ENCODE measurements at regions of chr9 and their contacts with region 1.

Region 1: DNA sequence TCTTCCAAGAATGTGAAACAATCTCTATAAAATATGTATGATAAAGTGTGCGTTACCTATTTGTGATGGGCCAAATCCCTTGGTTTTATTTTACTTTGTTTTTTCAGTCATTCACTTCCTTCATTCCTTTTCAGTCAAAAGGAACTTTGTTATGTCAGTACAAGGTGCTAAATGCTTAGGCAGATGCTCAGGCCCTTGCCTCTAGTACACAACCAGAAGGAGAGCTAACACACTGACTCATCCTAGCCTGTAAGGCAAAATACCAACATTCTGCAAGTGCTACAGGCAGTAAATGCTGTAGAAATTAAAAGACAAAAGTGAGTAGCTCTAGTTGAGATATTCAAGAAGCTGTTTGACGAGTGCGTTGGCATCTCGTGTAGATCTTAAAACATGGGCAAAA is 49.4 kb downstream of the TRPM6 start:
- DNase-seq: peak; percentile 37 to 53
- H3K4me3 ChIP-seq: no peak overlapping the region
- H3K27ac ChIP-seq: no peak overlapping the region
- H3K4me1 ChIP-seq: no peaks in the 10 kb centered on the region
- H3K27me3 ChIP-seq: no peaks in the 10 kb centered on the region
- CTCF ChIP-seq: no peak

Region 2: DNA sequence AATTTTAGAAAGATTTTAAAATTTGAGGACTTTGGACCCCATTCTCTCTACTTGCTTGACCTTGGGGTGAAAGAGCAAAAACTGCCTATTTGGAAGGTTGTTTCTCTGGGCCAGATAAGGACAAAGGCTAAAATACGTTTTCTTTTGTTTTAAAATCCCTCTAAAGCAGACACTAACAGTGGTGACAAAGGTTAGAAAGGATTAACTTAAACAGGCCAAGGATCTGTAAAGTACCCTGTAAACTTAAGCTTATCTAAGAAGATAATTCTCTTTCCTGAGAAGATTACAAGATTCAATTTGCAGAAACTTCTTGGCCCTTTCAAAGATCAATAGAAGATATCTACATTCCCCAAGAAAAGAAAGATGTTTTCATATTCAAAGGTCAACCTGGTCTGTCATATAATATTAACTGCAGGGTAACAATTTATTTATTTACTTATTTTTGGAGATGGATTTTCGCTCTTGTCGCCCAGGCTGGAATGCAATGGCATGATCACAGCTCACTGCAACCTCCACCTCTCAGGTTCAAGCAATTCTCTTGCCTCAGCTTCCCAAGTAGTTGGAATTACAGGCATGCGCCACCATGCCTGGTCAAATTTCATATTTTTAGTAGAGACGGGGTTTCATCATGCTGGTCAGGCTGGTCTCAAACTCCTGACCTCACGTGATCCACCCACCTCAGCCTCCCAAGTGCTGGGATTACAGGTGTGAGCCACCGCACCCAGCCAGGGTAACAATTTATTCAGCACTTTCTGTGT is 37.5 kb after region 1 on chr9:
- CTCF ChIA-PET with region 1: no interaction called
- POLR2A ChIA-PET with region 1: no interaction called
- intact Hi-C with region 1: no loop called
- DNase-seq: no peak
- H3K4me3 ChIP-seq: no peak overlapping the region
- H3K27ac ChIP-seq: no peak overlapping the region
- H3K4me1 ChIP-seq: no peaks in the 10 kb centered on the region
- H3K27me3 ChIP-seq: no peaks in the 10 kb centered on the region
- CTCF ChIP-seq: no peak

Region 3: DNA sequence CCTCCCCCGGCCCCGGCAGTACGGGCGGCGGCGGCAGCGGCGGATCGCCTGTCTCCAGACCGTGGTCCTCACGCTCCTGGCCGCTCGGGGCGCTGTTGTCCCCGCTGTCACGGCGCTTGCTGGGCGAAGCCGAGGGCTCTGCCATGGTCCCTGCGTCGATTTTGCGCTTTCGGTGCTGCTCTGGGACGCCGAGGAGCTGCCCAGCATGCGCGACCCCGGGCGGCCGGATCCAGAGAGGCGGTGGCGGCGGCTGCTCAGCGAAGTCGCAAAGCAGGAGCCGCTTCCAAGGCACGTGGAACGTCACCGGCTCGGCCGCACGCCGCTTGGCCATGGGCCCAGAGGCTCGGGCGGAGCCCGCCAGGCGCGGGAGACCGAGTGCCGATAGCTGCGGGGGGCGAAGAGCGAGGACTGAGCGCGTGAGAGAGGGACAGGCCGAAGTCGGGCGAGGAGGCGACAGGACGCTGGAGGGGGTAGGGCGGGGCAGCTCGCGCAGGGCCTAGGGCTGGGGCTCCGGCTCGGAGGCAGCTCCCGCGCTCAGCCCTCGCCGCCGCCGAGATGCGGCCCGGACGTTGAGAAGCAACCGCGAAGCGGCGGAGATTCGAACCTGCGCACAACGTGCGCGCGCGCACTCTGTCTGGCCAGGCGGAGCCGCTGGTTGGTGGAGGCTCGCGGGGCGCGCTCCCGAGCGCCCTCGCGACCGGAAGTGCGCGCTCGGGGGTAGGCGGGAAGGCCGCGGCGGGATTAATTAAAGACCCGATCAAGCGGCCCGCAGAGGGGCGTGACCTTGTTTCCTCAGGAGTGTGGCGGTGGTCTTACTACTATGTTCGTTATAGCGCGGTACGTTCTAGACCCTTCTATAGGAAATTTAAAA is 114.2 kb after region 1 on chr9 and contains the start of gene C9orf40:
- CTCF ChIA-PET with region 1: no interaction called
- POLR2A ChIA-PET with region 1: no interaction called
- intact Hi-C with region 1: loop called (anchors 5 kb)
- DNase-seq: peak; percentile 66 to 89
- H3K4me3 ChIP-seq: peak within 1 kb of the TSS; percentile 97
- H3K27ac ChIP-seq: peak within 1 kb of the TSS; percentile 60
- H3K4me1 ChIP-seq: peaks cover 6% of the 10 kb centered on the region; the same call in 1 of the 2 replicates
- H3K27me3 ChIP-seq: no peaks in the 10 kb centered on the region
- CTCF ChIP-seq: peak; percentile 83
- total RNA-seq, gene C9orf40: 10.8 and 11.3 TPM in 2 replicates